ENCODE measurements at regions of chr3 and their contacts with region 1.

Region 1: DNA sequence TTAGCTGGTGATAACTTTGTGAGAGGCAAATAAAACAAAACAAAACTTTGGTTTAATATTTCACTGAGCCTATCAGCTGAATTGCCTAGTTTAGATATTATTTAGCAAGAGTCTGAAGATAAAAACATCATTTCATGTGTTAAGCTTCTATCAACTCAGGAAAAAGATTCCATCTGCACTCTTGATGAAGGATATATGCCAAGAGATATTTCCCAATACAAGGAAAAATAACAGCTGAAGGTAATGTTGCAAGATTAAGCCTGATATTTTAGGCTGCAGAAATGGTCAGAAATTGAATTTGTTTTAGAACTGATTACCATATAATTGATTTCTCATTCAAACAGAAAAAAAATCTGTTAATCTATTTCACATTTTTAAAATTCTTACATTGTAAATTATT is 77.2 kb upstream of the SLITRK3 start:
- DNase-seq: no peak
- H3K4me3 ChIP-seq: no peak overlapping the region
- H3K4me3 Mint-ChIP-seq: no peak overlapping the region
- H3K27ac Mint-ChIP-seq: no peak overlapping the region
- H3K4me1 ChIP-seq: no peaks in the 10 kb centered on the region
- H3K4me1 Mint-ChIP-seq: no peaks in the 10 kb centered on the region
- H3K27me3 ChIP-seq: no peaks in the 10 kb centered on the region
- H3K27me3 Mint-ChIP-seq: no peaks in the 10 kb centered on the region
- CTCF ChIP-seq: no peak

Region 2: GRCh38 chr3:165206454-165207266 is 66.8 kb before region 1 on chr3:
- CTCF ChIA-PET with region 1: interaction called, 3 read pairs
- POLR2A ChIA-PET with region 1: no interaction called
- intact Hi-C with region 1: loop called (anchors 2 kb)
- DNase-seq: peak; percentile 57 to 67
- H3K4me3 ChIP-seq: no peak overlapping the region
- H3K4me3 Mint-ChIP-seq: peak overlapping the region; percentile 67
- H3K27ac Mint-ChIP-seq: no peak overlapping the region
- H3K4me1 ChIP-seq: no peaks in the 10 kb centered on the region
- H3K4me1 Mint-ChIP-seq: peaks cover 6% of the 10 kb centered on the region
- H3K27me3 ChIP-seq: no peaks in the 10 kb centered on the region
- H3K27me3 Mint-ChIP-seq: peaks cover 7% of the 10 kb centered on the region
- CTCF ChIP-seq: peak; percentile 71 to 99

Region 3: DNA sequence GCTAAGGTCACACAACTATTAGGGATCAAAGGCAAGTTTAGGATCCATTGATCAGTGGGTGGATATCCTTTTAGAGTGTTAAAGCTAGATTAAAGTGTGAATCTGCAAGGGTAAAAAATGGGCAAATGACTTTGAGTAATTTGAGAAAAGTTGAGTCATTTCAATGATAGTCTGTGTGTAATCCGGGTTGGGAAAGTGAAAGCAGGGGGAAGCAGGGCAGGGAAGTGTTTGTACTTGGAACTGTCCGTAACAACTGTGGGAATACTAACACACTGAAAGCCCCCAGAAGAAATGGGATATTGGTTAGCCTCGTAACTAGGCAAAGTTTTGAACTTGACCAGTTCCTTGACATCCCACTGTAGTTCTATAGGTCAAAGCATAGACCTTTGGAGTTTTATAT is 110.0 kb after region 1 on chr3:
- CTCF ChIA-PET with region 1: no interaction called
- POLR2A ChIA-PET with region 1: no interaction called
- intact Hi-C with region 1: no loop called
- DNase-seq: no peak
- H3K4me3 ChIP-seq: no peak overlapping the region
- H3K4me3 Mint-ChIP-seq: no peak overlapping the region
- H3K27ac Mint-ChIP-seq: no peak overlapping the region
- H3K4me1 ChIP-seq: no peaks in the 10 kb centered on the region
- H3K4me1 Mint-ChIP-seq: no peaks in the 10 kb centered on the region
- H3K27me3 ChIP-seq: no peaks in the 10 kb centered on the region
- H3K27me3 Mint-ChIP-seq: no peaks in the 10 kb centered on the region
- CTCF ChIP-seq: no peak

Region 4: DNA sequence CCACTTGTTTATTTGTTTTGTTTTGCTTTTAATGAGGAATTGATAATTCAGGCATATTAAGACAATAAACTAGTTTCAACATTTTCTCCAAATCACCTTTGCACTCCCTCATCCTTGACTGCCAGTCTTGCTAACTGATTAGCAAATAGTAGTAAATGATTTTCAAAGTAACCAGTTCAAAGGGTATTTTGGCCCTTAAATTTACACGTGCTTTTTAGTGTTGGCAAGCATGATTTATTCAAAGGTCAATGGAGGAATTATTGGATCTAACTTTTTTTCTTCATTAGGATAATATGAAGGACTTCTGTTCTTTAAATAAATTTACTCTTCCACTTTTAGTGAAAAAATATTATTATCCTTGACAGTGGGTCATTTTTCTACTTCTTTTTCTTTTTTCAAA is 510.0 kb after region 1 on chr3:
- CTCF ChIA-PET with region 1: no interaction called
- POLR2A ChIA-PET with region 1: no interaction called
- intact Hi-C with region 1: no loop called
- DNase-seq: no peak
- H3K4me3 ChIP-seq: no peak overlapping the region
- H3K4me3 Mint-ChIP-seq: no peak overlapping the region
- H3K27ac Mint-ChIP-seq: no peak overlapping the region
- H3K4me1 ChIP-seq: 0 out of 2 replicates have a peak, but pooled peaks cover 3% of the 10 kb centered on the region
- H3K4me1 Mint-ChIP-seq: no peaks in the 10 kb centered on the region
- H3K27me3 ChIP-seq: no peaks in the 10 kb centered on the region
- H3K27me3 Mint-ChIP-seq: no peaks in the 10 kb centered on the region
- CTCF ChIP-seq: no peak